Panc1 (cell line): ENCODE measurements at regions of chr6 and their contacts with region 1.

Region 1: DNA sequence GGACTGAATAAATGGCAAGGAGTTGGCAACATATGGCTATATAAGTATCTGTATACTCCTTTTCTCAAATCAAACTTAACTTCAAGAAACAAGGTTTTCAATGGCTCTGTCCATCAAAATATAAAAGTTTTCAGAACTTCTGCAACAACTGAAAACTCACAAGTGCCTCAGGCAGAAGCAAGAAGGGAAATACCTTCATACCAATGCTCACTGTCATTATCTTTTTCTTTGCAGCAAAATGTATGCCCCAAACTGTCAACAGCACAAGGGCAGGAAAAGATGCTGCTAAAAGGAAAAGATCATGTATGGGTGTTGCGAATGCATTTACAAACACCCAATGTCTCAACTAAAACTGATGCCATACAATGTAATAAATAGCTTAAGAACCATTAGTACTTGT is 45.9 kb downstream of the PTPRK start:
- DNase-seq: no peak
- ATAC-seq: 0 out of 2 replicates have a peak, but pooled peaks have one; percentile 34
- H3K4me3 ChIP-seq: no peak overlapping the region
- H3K27ac ChIP-seq: no peak overlapping the region
- H3K4me1 ChIP-seq: peaks cover 14% of the 10 kb centered on the region
- H3K27me3 ChIP-seq: no peaks in the 10 kb centered on the region
- CTCF ChIP-seq: no peak

Region 2: GRCh38 chr6:128275030-128275429 is 199.5 kb before region 1 on chr6:
- CTCF ChIA-PET with region 1: no interaction called
- POLR2A ChIA-PET with region 1: interaction called, 10 read pairs
- in situ Hi-C with region 1: no loop called
- intact Hi-C with region 1: no loop called
- DNase-seq: peak; percentile 63
- ATAC-seq: peak; percentile 85
- H3K4me3 ChIP-seq: no peak overlapping the region
- H3K27ac ChIP-seq: peak overlapping the region; percentile 59
- H3K4me1 ChIP-seq: peaks cover 25% of the 10 kb centered on the region
- H3K27me3 ChIP-seq: no peaks in the 10 kb centered on the region
- CTCF ChIP-seq: no peak

Region 3: GRCh38 chr6:128339635-128340450 is 134.6 kb before region 1 on chr6:
- CTCF ChIA-PET with region 1: no interaction called
- POLR2A ChIA-PET with region 1: no interaction called
- in situ Hi-C with region 1: no loop called
- intact Hi-C with region 1: no loop called
- DNase-seq: no peak
- ATAC-seq: no peak
- H3K4me3 ChIP-seq: no peak overlapping the region
- H3K27ac ChIP-seq: no peak overlapping the region
- H3K4me1 ChIP-seq: peaks cover 3% of the 10 kb centered on the region; the same call in 1 of the 2 replicates
- H3K27me3 ChIP-seq: no peaks in the 10 kb centered on the region
- CTCF ChIP-seq: no peak

Region 4: GRCh38 chr6:128487055-128487454 is 12.6 kb after region 1 on chr6:
- CTCF ChIA-PET with region 1: interaction called, 11 read pairs
- POLR2A ChIA-PET with region 1: no interaction called
- in situ Hi-C with region 1: no loop called
- intact Hi-C with region 1: no loop called
- DNase-seq: no peak
- ATAC-seq: peak; percentile 59; the same call in 1 of the 2 replicates
- H3K4me3 ChIP-seq: no peak overlapping the region
- H3K27ac ChIP-seq: peak overlapping the region; percentile 26
- H3K4me1 ChIP-seq: peaks cover 29% of the 10 kb centered on the region
- H3K27me3 ChIP-seq: no peaks in the 10 kb centered on the region
- CTCF ChIP-seq: peak; percentile 74